ENCODE measurements at regions of chr1 and their contacts with region 1.

Region 1: GRCh38 chr1:234716908-234717375 is 107.0 kb upstream of the IRF2BP2 start:
- DNase-seq: peak; percentile 81
- ATAC-seq: peak; percentile 62
- H3K4me3 ChIP-seq: peak overlapping the region; percentile 52 to 75 (median 62)
- H3K27ac ChIP-seq: peak overlapping the region; percentile 99
- H3K4me1 ChIP-seq: peaks cover 98% of the 10 kb centered on the region
- H3K27me3 ChIP-seq: no peaks in the 10 kb centered on the region; a peak in 1 of 5 replicates
- CTCF ChIP-seq: no peak
- EP300 ChIP-seq: no peak
- POLR2A ChIP-seq: peak; percentile 64 to 68; a peak in 3 of 4 replicates
- RAD21 ChIP-seq: no peak

Region 2: DNA sequence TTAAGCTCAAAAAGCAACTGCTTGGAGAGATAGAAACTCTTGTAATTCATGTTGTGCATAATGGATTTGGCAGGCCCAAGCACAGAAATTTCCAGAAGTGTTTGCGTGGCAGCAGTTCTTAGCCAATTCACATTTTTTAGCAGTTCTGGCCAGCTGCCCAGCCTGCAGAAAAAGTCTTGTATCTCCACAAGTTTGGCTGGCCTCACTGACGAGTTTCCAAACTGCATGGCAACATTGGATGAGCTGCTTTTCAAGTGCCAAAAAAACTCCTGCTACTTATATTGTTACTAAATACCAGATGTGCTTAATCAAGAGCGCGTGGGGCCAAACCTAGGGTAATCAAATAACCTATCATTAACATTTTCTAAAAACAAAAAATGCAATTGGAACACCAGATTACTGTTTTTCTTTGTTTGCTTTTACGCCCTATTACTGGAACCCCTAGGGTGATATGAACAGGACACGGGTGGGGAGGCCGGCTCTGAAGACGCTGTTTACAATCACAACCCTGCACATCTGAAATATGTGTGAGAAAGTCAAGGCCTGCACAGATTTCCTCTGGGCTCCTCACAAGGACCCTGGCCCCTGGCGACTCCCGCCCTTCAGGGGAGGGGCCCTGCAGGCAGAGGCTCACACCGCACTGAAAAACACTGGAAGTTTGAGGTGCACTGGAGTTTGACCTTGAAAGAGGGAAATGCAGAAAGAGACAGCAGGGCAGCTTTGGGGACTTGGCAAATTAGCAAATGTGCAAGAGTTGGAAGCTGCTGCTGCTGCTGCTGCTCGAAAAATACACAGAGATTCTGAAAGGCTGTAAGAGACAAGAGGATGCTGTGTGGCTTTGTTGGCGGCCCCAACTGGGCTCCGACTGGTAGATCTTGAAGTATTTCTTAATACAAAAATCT is 182.7 kb before region 1 on chr1:
- CTCF ChIA-PET with region 1: no interaction called
- POLR2A ChIA-PET with region 1: no interaction called
- in situ Hi-C with region 1: no loop called
- intact Hi-C with region 1: no loop called
- DNase-seq: no peak
- ATAC-seq: no peak
- H3K4me3 ChIP-seq: no peak overlapping the region
- H3K27ac ChIP-seq: no peak overlapping the region
- H3K4me1 ChIP-seq: peaks cover 76% of the 10 kb centered on the region
- H3K27me3 ChIP-seq: no peaks in the 10 kb centered on the region; a peak in 2 of 5 replicates
- CTCF ChIP-seq: no peak
- EP300 ChIP-seq: no peak
- POLR2A ChIP-seq: no peak
- RAD21 ChIP-seq: no peak

Region 3: GRCh38 chr1:234631721-234632125 is 85.2 kb before region 1 on chr1:
- CTCF ChIA-PET with region 1: no interaction called
- POLR2A ChIA-PET with region 1: interaction called, 29 read pairs
- in situ Hi-C with region 1: no loop called
- intact Hi-C with region 1: no loop called
- DNase-seq: peak; percentile 90
- ATAC-seq: peak; percentile 66
- H3K4me3 ChIP-seq: no peak overlapping the region
- H3K27ac ChIP-seq: peak overlapping the region; percentile 60
- H3K4me1 ChIP-seq: peaks cover 80% of the 10 kb centered on the region
- H3K27me3 ChIP-seq: no peaks in the 10 kb centered on the region
- CTCF ChIP-seq: no peak
- EP300 ChIP-seq: peak in 1 of 2 experiments; percentile 82; a peak in 2 of 4 replicates
- POLR2A ChIP-seq: no peak
- RAD21 ChIP-seq: no peak

Region 4: GRCh38 chr1:234683861-234684632 is 32.9 kb before region 1 on chr1:
- CTCF ChIA-PET with region 1: no interaction called
- POLR2A ChIA-PET with region 1: interaction called, 13 read pairs
- in situ Hi-C with region 1: no loop called
- intact Hi-C with region 1: loop called (anchors 1 kb)
- DNase-seq: peak; percentile 97
- ATAC-seq: peak; percentile 100
- H3K4me3 ChIP-seq: no peak overlapping the region
- H3K27ac ChIP-seq: peak overlapping the region; percentile 87
- H3K4me1 ChIP-seq: peaks cover 21% of the 10 kb centered on the region
- H3K27me3 ChIP-seq: no peaks in the 10 kb centered on the region
- CTCF ChIP-seq: 0 out of 2 replicates have a peak, but pooled peaks have one; percentile 22
- EP300 ChIP-seq: peak; percentile 79 to 93; a peak in 3 of 4 replicates
- POLR2A ChIP-seq: no peak
- RAD21 ChIP-seq: no peak; the same call in 1 of the 2 replicates

Region 5: DNA sequence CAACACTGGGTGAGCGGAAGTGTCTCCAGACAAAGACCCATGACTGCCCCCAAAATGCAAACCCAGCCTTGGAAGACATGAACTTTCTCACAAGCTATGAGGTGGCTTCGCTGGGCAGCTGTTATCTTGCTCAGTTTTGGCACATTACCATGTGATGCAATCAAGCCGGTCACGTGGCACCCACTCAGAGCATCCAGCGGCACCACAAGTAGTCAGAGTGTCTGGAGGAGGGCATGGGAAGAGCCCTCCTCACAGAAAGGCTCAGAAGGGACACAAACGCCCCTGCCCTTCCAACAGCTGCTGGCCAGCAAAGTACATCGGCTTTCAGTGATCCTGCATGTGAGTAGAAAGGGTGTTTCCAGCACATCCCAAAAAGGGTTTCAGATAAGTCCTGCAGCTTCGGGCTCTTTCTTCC is 38.5 kb after region 1 on chr1:
- CTCF ChIA-PET with region 1: no interaction called
- POLR2A ChIA-PET with region 1: interaction called, 15 read pairs
- in situ Hi-C with region 1: no loop called
- intact Hi-C with region 1: no loop called
- DNase-seq: no peak
- ATAC-seq: no peak
- H3K4me3 ChIP-seq: no peak overlapping the region
- H3K27ac ChIP-seq: no peak overlapping the region
- H3K4me1 ChIP-seq: peaks cover 55% of the 10 kb centered on the region
- H3K27me3 ChIP-seq: no peaks in the 10 kb centered on the region
- CTCF ChIP-seq: no peak
- EP300 ChIP-seq: no peak
- POLR2A ChIP-seq: no peak
- RAD21 ChIP-seq: no peak

Region 6: GRCh38 chr1:234955107-234955731 is 238.3 kb after region 1 on chr1:
- CTCF ChIA-PET with region 1: no interaction called
- POLR2A ChIA-PET with region 1: interaction called, 86 read pairs
- in situ Hi-C with region 1: no loop called
- intact Hi-C with region 1: no loop called
- DNase-seq: no peak
- ATAC-seq: peak; percentile 2; the same call in 1 of the 3 replicates
- H3K4me3 ChIP-seq: peak overlapping the region in 1 of 3 experiments; percentile 5; a peak in 1 of 6 replicates
- H3K27ac ChIP-seq: peak overlapping the region; percentile 100
- H3K4me1 ChIP-seq: peaks cover 85% of the 10 kb centered on the region
- H3K27me3 ChIP-seq: no peaks in the 10 kb centered on the region
- CTCF ChIP-seq: peak; percentile 5; the same call in 1 of the 2 replicates
- EP300 ChIP-seq: no peak; a peak in 1 of 4 replicates
- POLR2A ChIP-seq: 0 out of 4 replicates have a peak, but pooled peaks of 1 of the 2 experiments have one; percentile 36
- RAD21 ChIP-seq: 0 out of 2 replicates have a peak, but pooled peaks have one; percentile 10

Region 7: GRCh38 chr1:235006132-235006943 is 289.4 kb after region 1 on chr1:
- CTCF ChIA-PET with region 1: no interaction called
- POLR2A ChIA-PET with region 1: no interaction called
- in situ Hi-C with region 1: no loop called
- intact Hi-C with region 1: no loop called
- DNase-seq: no peak
- ATAC-seq: no peak
- H3K4me3 ChIP-seq: no peak overlapping the region
- H3K27ac ChIP-seq: no peak overlapping the region
- H3K4me1 ChIP-seq: no peaks in the 10 kb centered on the region
- H3K27me3 ChIP-seq: no peaks in the 10 kb centered on the region
- CTCF ChIP-seq: no peak
- EP300 ChIP-seq: no peak
- POLR2A ChIP-seq: no peak
- RAD21 ChIP-seq: no peak

Region 8: DNA sequence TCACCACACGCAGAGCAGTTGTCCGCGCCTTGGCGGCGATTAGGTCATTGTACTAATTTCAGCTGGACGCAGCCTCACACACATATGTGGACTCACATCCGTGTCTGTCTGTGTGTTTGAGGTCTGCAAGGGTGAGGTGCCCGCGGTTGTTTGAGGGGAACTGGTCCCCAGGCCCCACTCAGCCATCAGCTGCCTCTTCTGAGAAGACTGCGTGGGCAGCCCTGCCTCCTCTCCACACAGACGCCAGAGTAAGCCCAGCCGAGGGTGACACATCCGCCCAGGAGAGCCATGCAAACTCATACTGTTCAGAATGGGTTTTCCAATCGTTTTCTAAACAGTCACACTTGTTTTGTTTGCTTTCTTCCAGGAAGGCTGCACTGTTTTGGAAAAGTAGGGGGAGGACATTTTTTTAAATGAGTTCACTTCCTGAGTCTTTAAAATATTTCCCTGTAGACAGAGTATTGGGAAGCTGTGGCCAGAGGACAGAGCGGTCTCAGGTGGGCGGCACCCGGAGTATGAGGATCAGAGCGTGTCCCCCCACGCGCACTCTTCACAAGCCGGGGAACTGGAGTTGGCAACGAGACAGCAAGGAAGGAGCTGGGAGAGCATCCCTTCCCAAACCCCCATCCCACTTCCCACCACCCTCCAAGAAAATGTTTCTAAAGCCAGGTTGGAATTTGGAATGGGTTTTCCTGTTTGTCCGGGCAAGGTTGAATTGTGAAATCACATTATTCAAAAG is 358.4 kb after region 1 on chr1:
- CTCF ChIA-PET with region 1: no interaction called
- POLR2A ChIA-PET with region 1: interaction called, 79 read pairs
- in situ Hi-C with region 1: loop called (anchors 10 kb)
- intact Hi-C with region 1: no loop called
- DNase-seq: peak; percentile 89
- ATAC-seq: peak; percentile 57
- H3K4me3 ChIP-seq: peak overlapping the region; percentile 56 to 82 (median 58)
- H3K27ac ChIP-seq: peak overlapping the region; percentile 99
- H3K4me1 ChIP-seq: peaks cover 91% of the 10 kb centered on the region
- H3K27me3 ChIP-seq: no peaks in the 10 kb centered on the region; a peak in 1 of 5 replicates
- CTCF ChIP-seq: no peak
- EP300 ChIP-seq: peak in 1 of 2 experiments; percentile 59; a peak in 2 of 4 replicates
- POLR2A ChIP-seq: peak in 1 of 2 experiments; percentile 80; a peak in 2 of 4 replicates
- RAD21 ChIP-seq: no peak

Measured in HepG2 (cell line).